H1 (cell line): ENCODE measurements at regions of chr16 and their contacts with region 1.

Region 1: DNA sequence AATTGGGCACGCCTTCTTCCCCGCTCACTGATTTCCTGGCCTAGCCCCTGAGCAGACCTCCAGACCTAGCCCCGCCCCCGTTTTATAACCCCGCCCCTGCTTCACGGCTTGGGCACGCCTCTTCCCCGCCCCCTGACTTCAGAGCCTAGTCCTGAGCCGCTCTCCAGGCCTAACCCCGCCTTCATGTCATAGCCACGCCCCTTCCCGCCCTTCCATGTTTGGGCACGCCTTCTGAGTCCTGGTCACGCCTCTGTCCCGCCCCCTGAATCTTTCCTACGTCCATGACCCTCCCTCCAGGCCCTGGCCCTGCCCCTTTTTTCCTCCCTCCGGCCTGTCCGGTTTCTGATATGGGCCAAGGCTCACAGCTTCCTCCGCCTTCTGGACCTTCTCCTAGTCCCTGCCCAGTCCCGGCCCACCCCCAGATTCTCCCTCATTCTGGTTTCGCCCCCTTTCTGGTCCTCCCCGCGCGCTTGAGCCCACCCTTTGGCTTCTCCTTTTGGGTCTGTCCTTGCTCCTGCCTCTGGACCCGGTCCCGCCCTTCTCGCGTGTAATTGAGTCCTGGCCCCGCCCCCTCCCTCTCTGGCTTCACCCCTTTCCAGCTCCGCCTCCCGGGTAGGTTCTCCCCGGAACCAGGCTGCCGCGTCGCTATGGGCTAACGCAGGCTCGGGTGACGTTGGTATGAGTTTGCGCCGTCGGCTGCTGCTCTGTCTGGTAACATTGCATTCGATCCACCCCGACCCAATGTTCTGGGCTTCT is 15.1 kb upstream of the EEF2K start:
- DNase-seq: peak; percentile 99 to 100
- H3K4me3 ChIP-seq: peak overlapping the region; percentile 66 to 81 (median 74)
- H3K27ac ChIP-seq: peak overlapping the region; percentile 74; the same call in 1 of the 2 replicates
- H3K4me1 ChIP-seq: peaks cover 4 to 14% (median 10%) of the 10 kb centered on the region in 4 experiments; a peak in 6 of 7 replicates
- H3K27me3 ChIP-seq: peaks cover 0 to 6% (median 2%) of the 10 kb centered on the region in 4 experiments; a peak in 4 of 7 replicates
- CTCF ChIP-seq: no peak
- EP300 ChIP-seq: no peak
- POLR2A ChIP-seq: peak in 1 of 2 experiments; percentile 47; a peak in 2 of 3 replicates
- RAD21 ChIP-seq: no peak

Region 2: DNA sequence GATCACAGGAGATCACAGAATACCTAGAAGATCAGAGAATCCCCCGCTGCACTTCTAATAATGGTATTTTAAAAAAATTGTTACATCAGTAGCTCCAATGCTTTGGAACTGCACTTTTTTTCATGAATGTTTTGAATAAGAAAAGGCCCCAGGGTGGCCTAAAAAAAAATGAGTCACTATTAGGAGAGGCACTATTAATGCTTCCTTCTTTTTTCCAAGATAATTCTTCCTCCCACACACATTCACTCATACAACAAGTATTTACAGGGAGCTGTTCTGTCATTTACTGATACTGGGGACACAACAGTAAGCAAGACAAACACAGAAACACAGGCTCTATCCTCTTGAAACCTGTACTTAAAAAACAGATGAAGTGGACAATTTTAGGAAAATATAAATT is 189.4 kb before region 1 on chr16:
- CTCF ChIA-PET with region 1: interaction called, 127 read pairs
- POLR2A ChIA-PET with region 1: interaction called, 3 read pairs
- DNase-seq: no peak
- H3K4me3 ChIP-seq: no peak overlapping the region
- H3K27ac ChIP-seq: no peak overlapping the region
- H3K4me1 ChIP-seq: no peaks in the 10 kb centered on the region
- H3K27me3 ChIP-seq: 0 out of 7 replicates have a peak, but pooled peaks cover 0 to 2% (median under 1%) of the 10 kb centered on the region in 4 experiments
- CTCF ChIP-seq: no peak
- EP300 ChIP-seq: no peak
- POLR2A ChIP-seq: no peak
- RAD21 ChIP-seq: no peak

Region 3: DNA sequence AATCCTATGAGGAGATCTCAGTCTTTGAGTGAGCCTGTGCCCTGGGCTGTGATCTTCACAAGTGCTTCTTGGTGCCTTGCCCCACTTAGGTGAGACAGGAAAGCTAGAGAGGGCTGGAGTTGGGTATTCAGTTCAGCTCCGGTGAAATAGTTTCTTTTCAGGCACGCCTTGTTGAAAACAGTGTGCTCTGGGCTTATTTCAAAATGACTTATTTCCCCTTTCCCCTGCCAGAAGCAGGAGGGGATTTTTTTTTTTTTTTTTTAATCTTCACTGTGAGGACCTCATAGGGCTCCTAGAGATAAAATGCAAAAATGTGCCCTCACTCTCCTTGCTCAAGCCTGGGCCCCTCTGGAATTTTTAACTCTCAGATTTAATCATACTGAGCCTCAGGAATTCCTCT is 155.8 kb before region 1 on chr16:
- CTCF ChIA-PET with region 1: interaction called, 14 read pairs
- POLR2A ChIA-PET with region 1: no interaction called
- DNase-seq: no peak
- H3K4me3 ChIP-seq: no peak overlapping the region
- H3K27ac ChIP-seq: no peak overlapping the region
- H3K4me1 ChIP-seq: peaks cover 0 to 5% (median 0%) of the 10 kb centered on the region in 4 experiments; a peak in 1 of 7 replicates
- H3K27me3 ChIP-seq: no peaks in the 10 kb centered on the region
- CTCF ChIP-seq: no peak
- EP300 ChIP-seq: no peak
- POLR2A ChIP-seq: no peak
- RAD21 ChIP-seq: no peak

Region 4: DNA sequence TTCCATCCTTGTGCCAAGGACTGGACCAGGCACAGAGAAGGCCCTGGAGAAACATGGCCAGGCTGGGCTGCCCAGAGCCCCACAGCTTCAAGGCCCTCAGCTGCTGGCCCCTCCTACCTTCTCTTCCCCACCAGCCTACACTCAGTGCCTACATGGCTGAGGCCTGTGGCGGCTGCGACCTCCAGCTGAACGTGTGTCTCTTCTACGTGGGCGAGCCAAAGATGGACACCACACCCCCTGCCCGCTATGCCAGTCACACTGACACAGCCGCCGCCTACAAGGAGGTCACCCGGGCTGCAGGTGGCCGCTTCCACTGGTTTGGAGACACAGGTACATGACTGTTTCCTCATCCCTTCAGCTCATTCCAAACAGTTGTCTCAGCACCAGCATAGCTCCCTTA is 58.2 kb before region 1 on chr16:
- CTCF ChIA-PET with region 1: interaction called, 18 read pairs
- POLR2A ChIA-PET with region 1: no interaction called
- DNase-seq: no peak
- H3K4me3 ChIP-seq: no peak overlapping the region
- H3K27ac ChIP-seq: no peak overlapping the region
- H3K4me1 ChIP-seq: no peaks in the 10 kb centered on the region
- H3K27me3 ChIP-seq: no peaks in the 10 kb centered on the region
- CTCF ChIP-seq: no peak
- EP300 ChIP-seq: no peak
- POLR2A ChIP-seq: no peak
- RAD21 ChIP-seq: no peak

Region 5: GRCh38 chr16:22206013-22206841 is 15.3 kb after region 1 on chr16 and contains the start of gene EEF2K:
- CTCF ChIA-PET with region 1: interaction called, 16 read pairs
- POLR2A ChIA-PET with region 1: interaction called, 7 read pairs
- DNase-seq: peak; percentile 83 to 89
- H3K4me3 ChIP-seq: peak within 1 kb of the TSS; percentile 65 to 85 (median 76)
- H3K27ac ChIP-seq: no peak within 1 kb of the TSS
- H3K4me1 ChIP-seq: peaks cover 0 to 7% (median 4%) of the 10 kb centered on the region in 4 experiments; a peak in 4 of 7 replicates
- H3K27me3 ChIP-seq: no peaks in the 10 kb centered on the region
- CTCF ChIP-seq: peak; percentile 69 to 86 (median 76)
- EP300 ChIP-seq: peak in 1 of 2 experiments; percentile 39; a peak in 1 of 3 replicates
- POLR2A ChIP-seq: peak in 1 of 2 experiments; percentile 53; a peak in 1 of 3 replicates
- RAD21 ChIP-seq: peak; percentile 33 to 63
- total RNA-seq, gene EEF2K: 30.2 and 30.5 TPM in 2 replicates

Region 6: GRCh38 chr16:22267764-22268163 is 76.8 kb after region 1 on chr16:
- CTCF ChIA-PET with region 1: no interaction called
- POLR2A ChIA-PET with region 1: no interaction called
- DNase-seq: no peak
- H3K4me3 ChIP-seq: no peak overlapping the region
- H3K27ac ChIP-seq: no peak overlapping the region
- H3K4me1 ChIP-seq: no peaks in the 10 kb centered on the region
- H3K27me3 ChIP-seq: no peaks in the 10 kb centered on the region
- CTCF ChIP-seq: no peak
- EP300 ChIP-seq: no peak
- POLR2A ChIP-seq: no peak
- RAD21 ChIP-seq: no peak